Activated T-helper 1 cell treated with anti-CD3 and anti-CD28 coated beads, Interleukin-12 subunit alpha, Interleukin-12 subunit beta, Interleukin-2, Interleukin-4 antibody, amounts not matched to agents 30 ng/mL and 10 ng/mL and 1 ng/mL, durations not matched to agents 14 hours and 24 hours and 36 hours (primary cell): ENCODE measurements at regions of chr6 and their contacts with region 1.

Region 1: DNA sequence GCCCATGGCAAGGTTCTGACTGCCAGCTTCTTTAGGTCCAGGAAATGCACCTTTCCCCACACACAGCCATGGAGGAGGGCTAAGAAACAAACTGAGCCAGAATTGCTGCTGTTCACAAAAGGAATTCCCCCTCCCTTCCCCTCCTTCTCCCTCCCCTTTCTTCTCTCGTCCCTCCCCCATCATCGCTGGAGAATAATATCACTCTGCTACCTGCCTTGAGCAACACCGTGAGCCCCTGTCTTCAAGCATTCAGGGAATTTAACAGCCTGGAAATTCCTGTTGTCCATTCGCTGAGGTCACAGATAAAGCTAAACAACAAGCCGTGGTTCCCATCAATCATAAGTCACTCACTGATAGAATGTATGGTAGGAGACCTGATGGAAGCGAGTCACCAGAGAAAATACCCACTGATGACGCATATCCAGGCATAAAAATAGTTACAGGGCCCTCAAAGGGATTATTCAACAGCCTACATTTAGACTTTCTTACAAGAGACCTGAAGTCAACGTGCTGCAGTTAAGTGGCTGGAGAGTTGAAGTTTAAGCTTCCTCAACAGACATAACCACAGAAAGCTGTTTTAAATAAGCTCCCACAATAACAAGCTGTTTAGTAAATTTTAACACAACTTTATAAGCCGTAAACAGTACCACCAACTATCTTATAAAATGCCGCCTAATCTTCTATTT is 59.7 kb downstream of the HIVEP2 start:
- DNase-seq: peak; percentile 45
- H3K4me3 Mint-ChIP-seq: peak overlapping the region; percentile 96
- H3K27ac Mint-ChIP-seq: peak overlapping the region; percentile 99
- H3K4me1 Mint-ChIP-seq: peaks cover 92% of the 10 kb centered on the region
- H3K27me3 Mint-ChIP-seq: no peaks in the 10 kb centered on the region

Region 2: GRCh38 chr6:142810952-142811514 is 74.3 kb before region 1 on chr6:
- intact Hi-C with region 1: loop called (anchors 2 kb)
- DNase-seq: peak; percentile 15
- H3K4me3 Mint-ChIP-seq: peak overlapping the region; percentile 3
- H3K27ac Mint-ChIP-seq: peak overlapping the region; percentile 77
- H3K4me1 Mint-ChIP-seq: peaks cover 56% of the 10 kb centered on the region
- H3K27me3 Mint-ChIP-seq: no peaks in the 10 kb centered on the region

Region 3: DNA sequence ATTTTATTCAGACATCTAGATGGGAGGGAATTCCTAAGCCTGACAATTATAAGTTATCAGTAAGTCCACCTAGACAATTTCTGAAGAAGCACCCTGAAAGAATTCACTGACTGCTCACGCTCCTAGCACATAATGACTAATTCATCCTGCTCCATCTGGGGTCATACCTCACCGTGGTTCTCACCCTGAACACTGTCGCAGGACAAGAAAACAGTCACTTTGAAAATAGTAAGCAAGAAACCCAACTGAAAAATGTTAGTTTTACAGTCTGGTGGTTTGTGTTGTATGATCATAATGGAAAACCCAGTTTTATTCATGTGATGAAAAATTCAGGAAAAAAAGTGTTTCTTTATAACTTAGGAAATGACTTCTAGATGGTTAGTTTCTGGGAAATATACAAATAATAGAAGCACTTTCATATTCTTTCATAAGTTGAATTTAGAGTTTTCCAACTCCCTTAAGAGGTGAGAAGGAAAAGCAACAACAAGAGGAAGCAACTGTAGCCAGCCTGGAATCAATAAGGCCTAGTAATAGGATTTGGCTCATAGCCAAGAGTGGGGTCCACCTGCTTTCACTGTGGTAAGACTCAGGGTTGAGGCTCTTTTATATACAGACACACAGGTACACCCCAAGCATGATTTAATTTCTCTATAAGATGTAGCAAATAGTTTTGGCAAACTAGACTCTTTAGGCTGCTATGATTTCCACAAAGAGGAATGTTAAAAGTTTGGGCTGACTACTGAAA is 34.5 kb before region 1 on chr6:
- intact Hi-C with region 1: loop called (anchors 1 kb)
- DNase-seq: peak; percentile 41
- H3K4me3 Mint-ChIP-seq: peak overlapping the region; percentile 40
- H3K27ac Mint-ChIP-seq: peak overlapping the region; percentile 89
- H3K4me1 Mint-ChIP-seq: peaks cover 91% of the 10 kb centered on the region
- H3K27me3 Mint-ChIP-seq: no peaks in the 10 kb centered on the region

Region 4: DNA sequence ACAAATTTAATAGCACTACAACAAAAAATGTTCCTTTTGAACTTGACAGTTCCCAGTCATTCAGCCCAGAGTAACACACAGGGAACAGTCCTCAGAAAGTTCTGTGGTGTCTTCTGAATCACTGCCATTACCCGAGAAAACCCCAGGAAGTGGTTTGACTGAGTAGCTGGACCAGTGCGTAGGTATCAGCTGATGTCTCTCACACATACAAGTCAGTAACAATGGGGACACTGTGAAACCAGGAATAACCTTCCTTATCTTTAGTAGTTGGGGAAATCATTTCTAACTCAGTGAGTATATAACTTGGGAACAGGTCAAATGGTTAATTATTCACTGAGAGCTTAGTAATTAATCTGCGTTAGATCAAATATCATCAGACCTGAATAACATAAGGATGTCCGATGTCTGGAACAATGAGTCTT is 13.4 kb before region 1 on chr6:
- intact Hi-C with region 1: loop called (anchors 1 kb)
- DNase-seq: peak; percentile 55
- H3K4me3 Mint-ChIP-seq: peak overlapping the region; percentile 40
- H3K27ac Mint-ChIP-seq: peak overlapping the region; percentile 78
- H3K4me1 Mint-ChIP-seq: peaks cover 86% of the 10 kb centered on the region
- H3K27me3 Mint-ChIP-seq: no peaks in the 10 kb centered on the region

Region 5: GRCh38 chr6:142926494-142927270 is 41.4 kb after region 1 on chr6:
- intact Hi-C with region 1: loop called (anchors 1 kb)
- DNase-seq: peak; percentile 76
- H3K4me3 Mint-ChIP-seq: peak overlapping the region; percentile 90
- H3K27ac Mint-ChIP-seq: peak overlapping the region; percentile 96
- H3K4me1 Mint-ChIP-seq: peaks cover 62% of the 10 kb centered on the region
- H3K27me3 Mint-ChIP-seq: no peaks in the 10 kb centered on the region